Aorta (tissue), 5 donors: ENCODE measurements at regions of chr13 and their contacts with region 1.

Region 1: GRCh38 chr13:98576963-98577822 is at the start of gene STK24:
- DNase-seq: peak; percentile 79 to 89
- ATAC-seq: peak; percentile 88
- H3K4me3 ChIP-seq: peak within 1 kb of the TSS; percentile 93 to 95
- H3K27ac ChIP-seq: peak within 1 kb of the TSS; percentile 93 to 100
- H3K4me1 ChIP-seq: no peaks in the 10 kb centered on the region
- H3K27me3 ChIP-seq: no peaks in the 10 kb centered on the region
- total RNA-seq, gene STK24: 61.3 to 64.5 TPM

Region 2: GRCh38 chr13:97753942-97754670 is 823.1 kb before region 1 on chr13:
- intact Hi-C with region 1: no loop called
- DNase-seq: no peak
- ATAC-seq: no peak
- H3K4me3 ChIP-seq: no peak overlapping the region
- H3K27ac ChIP-seq: no peak overlapping the region
- H3K4me1 ChIP-seq: peaks cover 0 to 2% of the 10 kb centered on the region in 2 donors
- H3K27me3 ChIP-seq: no peaks in the 10 kb centered on the region

Region 3: DNA sequence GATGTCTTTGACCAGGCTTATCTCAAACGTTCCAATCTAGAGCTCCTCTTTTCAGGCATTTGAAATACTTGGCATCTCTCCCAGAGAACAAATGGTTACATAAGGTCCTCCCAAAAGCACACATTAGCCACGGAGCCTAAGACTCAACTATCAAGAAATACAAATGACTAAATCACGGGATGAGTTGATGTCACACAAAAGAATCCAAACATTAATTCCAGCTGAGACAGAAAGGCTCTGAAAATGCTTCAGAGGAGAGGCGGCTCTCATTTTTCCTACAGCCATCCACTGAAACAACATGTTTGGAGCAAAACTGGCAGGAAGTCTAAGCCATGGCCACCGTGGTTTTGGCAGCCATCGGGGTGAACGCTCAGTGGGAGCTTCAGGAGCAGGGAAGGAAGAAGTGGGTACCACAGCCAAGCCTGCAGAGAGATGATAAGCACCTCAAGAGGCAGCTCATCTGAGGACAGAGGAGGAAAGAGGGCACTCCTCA is 122.8 kb before region 1 on chr13:
- intact Hi-C with region 1: loop called (anchors 5 kb)
- DNase-seq: no peak
- ATAC-seq: peak; percentile 30
- H3K4me3 ChIP-seq: no peak overlapping the region
- H3K27ac ChIP-seq: peak overlapping the region in 1 of 2 donors; percentile 56
- H3K4me1 ChIP-seq: peaks cover 0 to 5% of the 10 kb centered on the region in 2 donors
- H3K27me3 ChIP-seq: no peaks in the 10 kb centered on the region

Region 4: GRCh38 chr13:98509271-98510155 is 67.7 kb before region 1 on chr13:
- intact Hi-C with region 1: loop called in 1 of 2 experiments (anchors 5 kb)
- DNase-seq: peak in 1 of 2 donors; percentile 81
- ATAC-seq: peak; percentile 79
- H3K4me3 ChIP-seq: no peak overlapping the region
- H3K27ac ChIP-seq: no peak overlapping the region
- H3K4me1 ChIP-seq: peaks cover 4% of the 10 kb centered on the region in 2 donors
- H3K27me3 ChIP-seq: no peaks in the 10 kb centered on the region

Region 5: GRCh38 chr13:98653463-98653985 is 76.3 kb after region 1 on chr13:
- intact Hi-C with region 1: loop called in 1 of 2 experiments (anchors 5 kb)
- DNase-seq: peak; percentile 83 to 90
- ATAC-seq: peak; percentile 88
- H3K4me3 ChIP-seq: no peak overlapping the region
- H3K27ac ChIP-seq: no peak overlapping the region
- H3K4me1 ChIP-seq: no peaks in the 10 kb centered on the region
- H3K27me3 ChIP-seq: no peaks in the 10 kb centered on the region